Body of pancreas (tissue), 4 donors: ENCODE measurements at regions of chr15 and their contacts with region 1.

Region 1: GRCh38 chr15:57654153-57654852 is 52.2 kb upstream of the POLR2M start:
- DNase-seq: no peak
- ATAC-seq: no peak
- H3K4me3 ChIP-seq: no peak overlapping the region
- H3K27ac ChIP-seq: no peak overlapping the region
- H3K4me1 ChIP-seq: no peaks in the 10 kb centered on the region
- H3K27me3 ChIP-seq: no peaks in the 10 kb centered on the region
- CTCF ChIP-seq: no peak
- POLR2A ChIP-seq: no peak

Region 2: DNA sequence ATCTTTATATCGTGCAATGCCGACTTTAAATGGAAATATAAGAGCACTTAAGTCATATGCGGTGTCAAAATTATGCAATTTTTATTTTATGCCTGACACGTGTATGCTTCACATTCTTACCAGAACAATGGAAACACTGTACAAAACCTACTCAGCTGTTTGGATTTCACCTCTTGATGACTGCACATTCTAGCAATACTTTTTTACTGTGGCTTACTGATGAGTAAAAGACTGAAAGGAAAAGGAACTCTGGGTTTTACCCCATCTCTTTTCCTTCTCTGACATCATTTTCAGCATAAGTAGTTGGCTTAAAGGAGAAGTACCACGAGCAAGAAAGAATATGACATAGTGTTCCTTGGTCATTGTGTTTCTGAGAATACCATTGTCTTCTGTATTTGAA is 195.0 kb after region 1 on chr15:
- intact Hi-C with region 1: loop called (anchors 10 kb)
- DNase-seq: no peak
- ATAC-seq: no peak
- H3K4me3 ChIP-seq: no peak overlapping the region
- H3K27ac ChIP-seq: no peak overlapping the region
- H3K4me1 ChIP-seq: no peaks in the 10 kb centered on the region
- H3K27me3 ChIP-seq: no peaks in the 10 kb centered on the region
- CTCF ChIP-seq: no peak
- POLR2A ChIP-seq: no peak